A549 (cell line): ENCODE measurements at regions of chr22 and their contacts with region 1.

Region 1: DNA sequence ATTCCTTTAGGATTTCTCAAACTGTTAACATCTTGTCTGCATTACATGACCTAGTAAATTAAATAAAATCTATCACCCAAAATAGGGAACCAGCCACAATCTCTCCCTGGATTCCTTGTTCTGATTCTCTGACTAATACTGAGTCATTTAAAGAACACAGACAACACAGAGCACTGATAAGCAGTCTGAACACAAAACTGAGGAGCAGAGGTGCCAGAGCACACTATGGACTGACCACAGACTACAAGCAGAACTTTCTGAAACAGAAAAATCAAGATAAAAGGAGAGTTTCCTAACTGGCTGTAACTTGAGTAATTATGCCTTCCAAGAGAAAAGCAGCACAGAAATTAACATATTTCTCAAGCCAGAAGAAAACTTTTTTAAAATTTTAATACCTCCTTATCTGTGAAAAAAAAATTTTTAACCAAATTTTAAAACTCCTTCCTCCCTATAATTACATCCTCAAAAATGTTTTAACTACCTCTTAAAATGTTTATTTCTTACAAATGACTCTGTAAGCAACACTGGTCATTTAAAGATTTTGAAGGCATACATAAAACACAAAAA is 128.9 kb downstream of the SGSM3 start:
- DNase-seq: peak; percentile 60 to 89
- ATAC-seq: peak; percentile 86 to 92
- H3K4me3 ChIP-seq: peak overlapping the region; percentile 25; the same call in 2 of the 3 replicates
- H3K27ac ChIP-seq: peak overlapping the region; percentile 96 to 97
- H3K4me1 ChIP-seq: peaks cover 61% of the 10 kb centered on the region
- CTCF ChIP-seq: no peak
- EP300 ChIP-seq: peak; percentile 54 to 58; a peak in 3 of 5 replicates
- POLR2A ChIP-seq: no peak
- RAD21 ChIP-seq: 0 out of 5 replicates have a peak, but pooled peaks of 1 of the 2 experiments have one; percentile 11

Region 2: GRCh38 chr22:40385036-40385782 is 114.1 kb before region 1 on chr22:
- CTCF ChIA-PET with region 1: no interaction called
- POLR2A ChIA-PET with region 1: no interaction called
- DNase-seq: no peak
- ATAC-seq: no peak
- H3K4me3 ChIP-seq: no peak overlapping the region
- H3K27ac ChIP-seq: no peak overlapping the region
- H3K4me1 ChIP-seq: no peaks in the 10 kb centered on the region
- CTCF ChIP-seq: no peak
- EP300 ChIP-seq: no peak
- POLR2A ChIP-seq: no peak
- RAD21 ChIP-seq: no peak

Region 3: GRCh38 chr22:40487663-40488249 is 11.5 kb before region 1 on chr22:
- CTCF ChIA-PET with region 1: interaction called, 22 read pairs
- POLR2A ChIA-PET with region 1: interaction called, 3 read pairs
- DNase-seq: peak; percentile 28 to 50
- ATAC-seq: peak; percentile 59 to 70; a peak in 4 of 6 replicates
- H3K4me3 ChIP-seq: no peak overlapping the region
- H3K27ac ChIP-seq: peak overlapping the region; percentile 44 to 73; a peak in 4 of 6 replicates
- H3K4me1 ChIP-seq: peaks cover 62% of the 10 kb centered on the region
- CTCF ChIP-seq: peak; percentile 66
- EP300 ChIP-seq: no peak
- POLR2A ChIP-seq: no peak
- RAD21 ChIP-seq: peak; percentile 44 to 50; a peak in 4 of 5 replicates

Region 4: DNA sequence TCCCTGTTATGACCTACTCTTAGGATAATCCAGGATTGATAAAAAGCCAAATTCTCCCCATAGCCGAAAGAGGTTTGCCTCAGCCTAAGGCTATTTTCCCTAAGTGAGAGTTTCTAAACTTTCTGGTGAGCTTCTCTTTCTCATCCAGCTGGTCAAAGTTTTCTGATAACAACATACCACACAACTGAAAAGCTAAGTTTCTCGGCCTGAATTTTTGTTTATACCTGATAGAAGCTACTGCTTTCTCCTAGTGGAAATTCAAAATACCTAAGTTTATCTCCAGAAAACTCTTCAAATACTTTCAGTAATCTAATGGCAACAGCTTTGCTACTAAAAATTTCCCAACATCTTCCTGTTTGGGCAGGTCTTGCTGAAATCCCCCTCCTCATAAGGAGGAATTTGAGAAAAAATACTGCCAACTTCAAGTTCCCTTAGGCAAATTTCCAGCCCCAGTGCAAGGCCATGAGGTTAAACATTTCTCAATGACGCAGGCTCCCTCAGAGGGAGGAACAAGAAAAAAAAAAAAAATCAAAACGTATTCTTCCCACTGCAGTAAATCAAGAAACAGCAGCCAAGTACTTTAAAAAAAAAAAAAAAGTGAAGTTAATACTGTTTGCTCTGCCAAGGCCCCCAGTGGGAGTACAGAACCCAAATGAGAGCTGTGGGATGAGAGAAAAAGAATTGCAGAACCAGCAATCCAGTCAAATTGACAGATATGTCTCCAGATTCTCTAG is 10.3 kb after region 1 on chr22:
- CTCF ChIA-PET with region 1: interaction called, 6 read pairs
- POLR2A ChIA-PET with region 1: interaction called, 12 read pairs
- DNase-seq: peak in 1 of 2 experiments; percentile 94
- ATAC-seq: peak; percentile 41 to 61; a peak in 5 of 6 replicates
- H3K4me3 ChIP-seq: no peak overlapping the region; the same call in 2 of the 3 replicates
- H3K27ac ChIP-seq: peak overlapping the region; percentile 94 to 99
- H3K4me1 ChIP-seq: peaks cover 92% of the 10 kb centered on the region
- CTCF ChIP-seq: no peak
- EP300 ChIP-seq: peak; percentile 91 to 96; a peak in 4 of 5 replicates
- POLR2A ChIP-seq: no peak
- RAD21 ChIP-seq: peak; percentile 2 to 6; a peak in 3 of 5 replicates

Region 5: DNA sequence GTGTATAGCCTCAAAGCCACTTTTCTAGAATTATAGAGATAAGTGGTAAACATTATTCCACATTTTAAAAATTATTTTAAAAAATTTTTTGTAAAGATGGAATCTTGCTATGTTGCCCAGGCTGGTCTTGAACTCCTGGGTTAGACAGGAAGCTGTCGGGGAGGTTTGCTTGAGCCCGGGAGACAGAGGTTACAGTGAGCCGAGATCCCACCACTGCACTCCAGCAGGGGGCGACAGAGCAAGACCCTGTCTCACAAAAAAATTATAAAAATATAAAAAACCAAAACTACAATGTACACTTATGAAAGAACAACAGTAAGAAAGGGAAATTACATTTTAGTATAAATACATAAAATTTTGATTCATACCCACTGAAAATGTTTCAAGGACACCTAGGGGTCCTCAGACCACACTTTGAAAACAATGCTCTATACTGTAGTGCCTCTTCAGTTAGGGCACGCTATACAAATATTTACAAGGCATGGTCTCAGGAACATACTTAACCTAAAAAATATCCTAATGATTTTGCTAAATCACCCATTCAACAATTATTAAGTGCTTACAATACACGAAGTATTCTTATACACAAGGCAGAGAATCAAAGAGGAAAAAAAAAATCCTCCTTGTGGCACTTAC is 26.1 kb after region 1 on chr22:
- CTCF ChIA-PET with region 1: interaction called, 13 read pairs
- POLR2A ChIA-PET with region 1: no interaction called
- DNase-seq: peak in 1 of 2 experiments; percentile 65
- ATAC-seq: peak; percentile 39 to 75; a peak in 3 of 6 replicates
- H3K4me3 ChIP-seq: no peak overlapping the region
- H3K27ac ChIP-seq: peak overlapping the region; percentile 68 to 85
- H3K4me1 ChIP-seq: peaks cover 78% of the 10 kb centered on the region
- CTCF ChIP-seq: peak; percentile 65
- EP300 ChIP-seq: no peak
- POLR2A ChIP-seq: no peak
- RAD21 ChIP-seq: peak; percentile 42 to 55

Region 6: DNA sequence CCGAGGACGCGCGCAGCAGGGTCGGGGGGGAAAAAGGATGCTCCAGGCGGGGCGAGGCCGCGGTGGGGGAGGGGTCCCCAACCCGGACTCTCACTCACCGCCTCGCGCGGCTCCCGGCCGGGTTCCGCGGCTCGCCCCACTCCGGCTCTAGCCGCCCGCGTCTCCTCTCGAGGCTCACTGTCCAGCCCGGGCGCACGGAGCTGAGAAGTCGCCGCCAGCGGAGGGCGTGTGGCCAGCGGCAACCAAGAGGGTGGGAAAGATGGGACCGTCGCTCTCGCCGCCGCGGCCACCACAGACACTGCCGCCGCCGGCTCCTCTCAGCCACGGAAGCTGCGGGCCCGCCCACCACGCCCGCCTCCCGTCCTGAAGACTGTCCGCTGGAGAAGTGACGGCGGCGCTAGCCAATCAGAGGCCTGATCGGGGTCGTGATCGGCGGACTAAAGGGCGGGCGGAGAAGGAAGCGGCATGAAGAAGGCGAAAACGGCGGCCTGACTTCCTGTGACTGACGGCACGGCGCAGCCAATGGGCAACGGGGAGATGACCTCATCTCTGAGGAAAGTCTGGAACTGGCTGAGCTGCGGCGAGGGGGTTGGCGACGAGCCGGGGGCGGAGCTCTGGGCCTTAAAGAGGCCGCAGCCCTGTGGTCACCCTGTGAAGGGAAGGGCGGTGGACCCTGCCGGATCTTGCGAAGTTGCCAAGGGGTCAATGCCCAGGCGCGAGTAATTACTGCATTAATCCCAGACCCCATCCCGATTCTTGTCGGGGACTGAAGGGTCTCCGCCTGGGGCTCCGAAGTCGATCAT is 137.3 kb after region 1 on chr22 and contains the start of gene MRTFA:
- CTCF ChIA-PET with region 1: no interaction called
- POLR2A ChIA-PET with region 1: interaction called, 11 read pairs
- DNase-seq: peak; percentile 76 to 99
- ATAC-seq: peak; percentile 97 to 98
- H3K4me3 ChIP-seq: peak within 1 kb of the TSS; percentile 98
- H3K27ac ChIP-seq: peak within 1 kb of the TSS; percentile 94 to 97
- H3K4me1 ChIP-seq: peaks cover 47% of the 10 kb centered on the region
- CTCF ChIP-seq: no peak
- EP300 ChIP-seq: no peak
- POLR2A ChIP-seq: peak; percentile 78
- RAD21 ChIP-seq: no peak; a peak in 1 of 5 replicates
- polyA plus RNA-seq, gene MRTFA: 6.8 and 12.8 TPM in 2 replicates